Activated CD4-positive, alpha-beta T cell treated with anti-CD3 and anti-CD28 coated beads for 36 hours (primary cell): ENCODE measurements at regions of chr7 and their contacts with region 1.

Region 1: GRCh38 chr7:132580717-132581285 is 4.5 kb upstream of the PLXNA4 start:
- DNase-seq: peak; percentile 84
- ATAC-seq: peak; percentile 87
- H3K4me3 Mint-ChIP-seq: no peak overlapping the region
- H3K27ac Mint-ChIP-seq: no peak overlapping the region
- H3K4me1 Mint-ChIP-seq: peaks cover 6% of the 10 kb centered on the region
- H3K27me3 Mint-ChIP-seq: peaks cover 26% of the 10 kb centered on the region

Region 2: DNA sequence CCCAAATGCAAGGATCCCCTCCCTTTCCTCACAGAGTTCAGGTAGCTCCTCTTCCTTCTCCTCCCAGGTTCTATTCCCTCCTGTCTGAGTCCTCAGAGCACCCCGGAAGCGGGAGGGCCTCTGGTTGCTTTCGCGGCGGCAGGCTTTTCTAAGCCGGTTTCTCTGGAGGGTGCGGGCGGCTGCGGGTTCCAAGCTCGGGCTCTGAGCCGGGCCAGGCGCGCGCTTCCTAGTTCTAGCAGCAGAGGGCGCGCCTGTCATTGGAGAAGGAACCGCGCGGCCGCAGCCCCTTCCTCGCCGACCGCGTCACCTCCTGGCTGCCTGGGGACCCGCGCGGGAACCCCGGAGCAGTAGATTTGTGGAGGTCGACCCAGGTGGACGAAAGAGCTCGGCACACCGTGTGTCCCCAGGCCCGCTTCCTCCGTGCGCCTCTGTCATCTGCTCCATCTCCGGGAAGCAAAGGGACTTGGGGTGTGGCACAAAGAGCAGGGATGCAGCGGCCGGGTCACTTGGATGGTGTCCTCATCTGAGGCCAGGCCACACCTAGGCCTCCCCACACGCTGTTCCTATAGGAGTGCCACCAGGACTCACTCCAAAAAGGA is 635.4 kb before region 1 on chr7:
- CTCF ChIA-PET with region 1: interaction called, 5 read pairs
- POLR2A ChIA-PET with region 1: no interaction called
- intact Hi-C with region 1: loop called in 1 of 2 experiments (anchors 1 kb)
- DNase-seq: peak; percentile 69
- ATAC-seq: peak; percentile 64
- H3K4me3 Mint-ChIP-seq: no peak overlapping the region
- H3K27ac Mint-ChIP-seq: no peak overlapping the region
- H3K4me1 Mint-ChIP-seq: no peaks in the 10 kb centered on the region
- H3K27me3 Mint-ChIP-seq: peaks cover 36% of the 10 kb centered on the region

Region 3: GRCh38 chr7:132318352-132319318 is 262.2 kb before region 1 on chr7:
- CTCF ChIA-PET with region 1: interaction called, 24 read pairs
- POLR2A ChIA-PET with region 1: interaction called, 3 read pairs
- intact Hi-C with region 1: loop called (anchors 1 kb)
- DNase-seq: peak; percentile 88
- ATAC-seq: peak; percentile 95
- H3K4me3 Mint-ChIP-seq: peak overlapping the region; percentile 17
- H3K27ac Mint-ChIP-seq: no peak overlapping the region
- H3K4me1 Mint-ChIP-seq: peaks cover 10% of the 10 kb centered on the region
- H3K27me3 Mint-ChIP-seq: peaks cover 35% of the 10 kb centered on the region

Region 4: GRCh38 chr7:132394283-132395198 is 186.3 kb before region 1 on chr7:
- CTCF ChIA-PET with region 1: interaction called, 19 read pairs
- POLR2A ChIA-PET with region 1: no interaction called
- intact Hi-C with region 1: loop called (anchors 1 kb)
- DNase-seq: peak; percentile 27
- ATAC-seq: no peak
- H3K4me3 Mint-ChIP-seq: no peak overlapping the region
- H3K27ac Mint-ChIP-seq: no peak overlapping the region
- H3K4me1 Mint-ChIP-seq: no peaks in the 10 kb centered on the region
- H3K27me3 Mint-ChIP-seq: peaks cover 2% of the 10 kb centered on the region

Region 5: GRCh38 chr7:132646052-132646451 is 65.3 kb after region 1 on chr7:
- CTCF ChIA-PET with region 1: no interaction called
- POLR2A ChIA-PET with region 1: no interaction called
- intact Hi-C with region 1: no loop called
- DNase-seq: no peak
- ATAC-seq: no peak
- H3K4me3 Mint-ChIP-seq: no peak overlapping the region
- H3K27ac Mint-ChIP-seq: no peak overlapping the region
- H3K4me1 Mint-ChIP-seq: no peaks in the 10 kb centered on the region
- H3K27me3 Mint-ChIP-seq: no peaks in the 10 kb centered on the region

Region 6: DNA sequence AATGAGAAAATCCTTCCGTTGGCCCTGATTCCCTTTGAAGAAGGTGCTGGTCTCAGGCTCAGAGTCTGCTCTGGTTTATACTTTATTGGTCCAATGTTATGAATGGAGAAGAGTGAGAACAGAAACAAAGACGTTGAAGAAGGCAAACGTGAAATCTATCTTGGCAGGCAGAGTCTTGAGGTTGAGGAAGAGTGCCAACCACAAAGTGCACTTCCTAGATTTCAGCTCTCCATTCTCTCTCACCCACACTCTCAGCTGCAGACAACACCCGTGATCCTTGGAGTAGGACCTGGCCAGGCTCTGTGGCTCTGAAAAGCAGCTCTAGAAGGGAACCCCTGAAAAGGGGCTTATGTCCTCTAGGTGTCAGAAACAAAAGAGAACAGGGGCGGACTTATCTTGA is 124.3 kb after region 1 on chr7:
- CTCF ChIA-PET with region 1: no interaction called
- POLR2A ChIA-PET with region 1: no interaction called
- intact Hi-C with region 1: no loop called
- DNase-seq: no peak
- ATAC-seq: no peak
- H3K4me3 Mint-ChIP-seq: no peak overlapping the region
- H3K27ac Mint-ChIP-seq: no peak overlapping the region
- H3K4me1 Mint-ChIP-seq: no peaks in the 10 kb centered on the region
- H3K27me3 Mint-ChIP-seq: no peaks in the 10 kb centered on the region